ENCODE measurements at regions of chr2 and their contacts with region 1.

Region 1: DNA sequence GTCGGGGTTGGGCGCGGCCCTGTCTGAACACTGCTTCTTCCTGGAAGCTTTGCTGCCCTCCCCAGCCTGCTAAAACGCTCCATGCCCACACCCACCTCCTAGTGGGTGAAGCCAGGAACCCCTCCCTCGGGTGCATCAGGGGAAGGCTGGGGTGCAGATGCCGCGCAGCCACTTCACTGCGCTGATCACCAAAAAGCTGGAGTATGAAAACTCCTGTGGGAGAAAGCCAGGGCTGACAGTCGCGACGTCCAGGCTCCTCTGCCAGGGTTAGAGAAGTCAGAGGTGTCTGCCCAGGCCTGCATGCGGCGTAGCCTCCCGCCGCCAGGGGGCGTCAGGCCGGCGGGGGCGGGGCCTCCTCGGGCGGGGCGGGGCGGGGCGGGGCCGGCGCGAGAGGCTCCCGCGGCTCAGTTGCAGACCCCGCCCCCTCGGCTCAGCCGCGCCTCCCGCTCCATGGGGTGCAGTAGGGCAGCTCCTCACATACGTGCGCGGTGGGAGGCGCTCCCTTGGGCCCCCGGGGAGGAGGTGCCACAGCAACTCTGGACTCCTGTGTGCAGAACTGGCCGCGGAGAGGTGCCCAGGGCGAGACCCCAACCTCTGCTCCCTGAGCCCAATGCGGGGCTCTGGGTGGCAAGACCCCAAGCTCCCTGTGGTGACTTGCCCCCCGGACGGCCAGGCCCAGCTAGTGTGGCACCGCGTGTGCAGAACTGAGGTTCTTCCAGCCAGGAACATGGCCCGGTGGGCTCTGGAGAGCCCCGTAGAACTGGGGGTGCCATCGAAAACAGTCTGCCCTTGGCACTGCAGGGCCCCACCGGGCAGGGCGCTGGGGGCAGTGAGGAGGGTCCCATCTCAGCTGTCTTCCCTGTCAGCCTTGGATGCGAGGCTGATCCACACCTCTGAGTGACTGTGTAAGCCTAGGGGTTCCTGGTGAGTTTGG is 1.8 kb upstream of the RNPEPL1 start:
- DNase-seq: peak; percentile 81
- ATAC-seq: peak; percentile 71
- H3K4me3 ChIP-seq: peak overlapping the region; percentile 64 to 85
- H3K27ac ChIP-seq: peak overlapping the region; percentile 100
- H3K4me1 ChIP-seq: peaks cover 51 to 73% of the 10 kb centered on the region in 2 experiments
- H3K27me3 ChIP-seq: no peaks in the 10 kb centered on the region
- CTCF ChIP-seq: peak in 2 of 3 experiments; percentile 68 to 78; a peak in 4 of 6 replicates
- POLR2A ChIP-seq: no peak
- RAD21 ChIP-seq: no peak

Region 2: GRCh38 chr2:239991689-239992314 is 574.7 kb before region 1 on chr2:
- CTCF ChIA-PET with region 1: no interaction called
- POLR2A ChIA-PET with region 1: no interaction called
- RAD21 ChIA-PET with region 1: no interaction called
- intact Hi-C with region 1: no loop called
- DNase-seq: peak; percentile 27
- ATAC-seq: peak; percentile 70
- H3K4me3 ChIP-seq: no peak overlapping the region
- H3K27ac ChIP-seq: no peak overlapping the region
- H3K4me1 ChIP-seq: no peaks in the 10 kb centered on the region
- H3K27me3 ChIP-seq: no peaks in the 10 kb centered on the region
- CTCF ChIP-seq: peak; percentile 62 to 89 (median 72); a peak in 5 of 6 replicates
- POLR2A ChIP-seq: no peak
- RAD21 ChIP-seq: peak; percentile 76

Region 3: GRCh38 chr2:240170356-240171282 is 395.9 kb before region 1 on chr2:
- CTCF ChIA-PET with region 1: no interaction called
- POLR2A ChIA-PET with region 1: no interaction called
- RAD21 ChIA-PET with region 1: no interaction called
- intact Hi-C with region 1: no loop called
- DNase-seq: no peak
- ATAC-seq: peak; percentile 54; the same call in 1 of the 2 replicates
- H3K4me3 ChIP-seq: no peak overlapping the region
- H3K27ac ChIP-seq: no peak overlapping the region
- H3K4me1 ChIP-seq: no peaks in the 10 kb centered on the region
- H3K27me3 ChIP-seq: no peaks in the 10 kb centered on the region
- CTCF ChIP-seq: no peak
- POLR2A ChIP-seq: no peak
- RAD21 ChIP-seq: no peak

Region 4: GRCh38 chr2:240513549-240514287 is 52.8 kb before region 1 on chr2:
- CTCF ChIA-PET with region 1: interaction called, 9 read pairs
- POLR2A ChIA-PET with region 1: interaction called, 4 read pairs
- RAD21 ChIA-PET with region 1: interaction called in 1 of 2 experiments, 3 read pairs
- intact Hi-C with region 1: loop called (anchors 5 kb)
- DNase-seq: peak; percentile 29
- ATAC-seq: peak; percentile 99
- H3K4me3 ChIP-seq: no peak overlapping the region
- H3K27ac ChIP-seq: no peak overlapping the region
- H3K4me1 ChIP-seq: peaks cover 0 to 6% of the 10 kb centered on the region in 2 experiments; a peak in 2 of 4 replicates
- H3K27me3 ChIP-seq: no peaks in the 10 kb centered on the region
- CTCF ChIP-seq: peak; percentile 71 to 97 (median 96); a peak in 5 of 6 replicates
- POLR2A ChIP-seq: no peak
- RAD21 ChIP-seq: peak; percentile 92

Region 5: GRCh38 chr2:240579771-240580614 is 13.5 kb after region 1 on chr2:
- CTCF ChIA-PET with region 1: interaction called, 48 read pairs
- POLR2A ChIA-PET with region 1: interaction called, 23 read pairs
- RAD21 ChIA-PET with region 1: interaction called, 5 read pairs
- intact Hi-C with region 1: loop called (anchors 1 kb)
- DNase-seq: peak; percentile 77
- ATAC-seq: peak; percentile 82
- H3K4me3 ChIP-seq: peak overlapping the region; percentile 1 to 40; a peak in 3 of 4 replicates
- H3K27ac ChIP-seq: peak overlapping the region; percentile 77
- H3K4me1 ChIP-seq: peaks cover 42 to 55% of the 10 kb centered on the region in 2 experiments
- H3K27me3 ChIP-seq: no peaks in the 10 kb centered on the region
- CTCF ChIP-seq: peak in 2 of 3 experiments; percentile 62 to 75; a peak in 4 of 6 replicates
- POLR2A ChIP-seq: no peak
- RAD21 ChIP-seq: no peak

Region 6: DNA sequence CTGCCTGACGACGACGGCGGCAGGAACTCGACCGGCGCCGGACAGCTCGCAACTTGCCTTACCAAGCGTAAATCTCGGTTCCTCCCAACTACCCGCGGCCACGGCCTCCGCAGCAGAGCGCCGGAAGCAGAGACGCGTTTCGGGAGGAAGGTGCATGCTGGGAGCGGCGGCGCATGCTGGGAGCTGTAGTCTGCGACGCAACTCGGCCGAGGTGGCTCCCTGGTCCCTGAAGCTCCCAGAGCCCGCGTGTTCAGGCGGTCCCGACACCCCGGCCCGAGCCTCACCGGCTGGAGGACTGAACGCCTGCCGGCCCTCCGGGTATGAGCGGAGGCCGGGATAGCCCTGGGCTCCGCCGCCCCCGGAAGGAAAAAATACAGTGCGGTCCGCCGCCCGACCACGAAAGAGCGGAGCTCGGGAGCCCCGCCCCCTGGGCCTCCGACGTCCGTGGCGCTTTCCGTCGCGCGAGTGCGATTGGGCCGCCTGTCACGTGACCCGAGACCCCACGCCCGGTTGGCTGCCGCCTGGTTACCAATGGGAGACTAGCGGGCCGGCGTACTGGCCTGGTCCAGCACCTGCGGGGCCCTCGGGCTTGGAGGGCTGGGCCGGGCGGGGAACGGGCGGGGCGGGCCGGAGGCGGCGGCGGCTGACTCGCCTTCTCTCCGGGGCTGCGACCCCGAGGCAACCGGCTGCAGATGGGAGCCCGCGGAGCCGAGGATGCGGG is 19.9 kb after region 1 on chr2 and contains the start of gene CAPN10:
- CTCF ChIA-PET with region 1: interaction called, 48 read pairs
- POLR2A ChIA-PET with region 1: interaction called, 23 read pairs
- RAD21 ChIA-PET with region 1: interaction called, 4 to 6 read pairs
- intact Hi-C with region 1: loop called (anchors 2 kb)
- DNase-seq: peak; percentile 86
- ATAC-seq: peak; percentile 88
- H3K4me3 ChIP-seq: peak within 1 kb of the TSS; percentile 98 to 99
- H3K27ac ChIP-seq: peak within 1 kb of the TSS; percentile 85
- H3K4me1 ChIP-seq: peaks cover 28 to 47% of the 10 kb centered on the region in 2 experiments
- H3K27me3 ChIP-seq: no peaks in the 10 kb centered on the region
- CTCF ChIP-seq: no peak
- POLR2A ChIP-seq: no peak
- RAD21 ChIP-seq: no peak
- total RNA-seq, gene CAPN10: 40.7 TPM

Region 7: GRCh38 chr2:240596491-240596931 is 30.0 kb after region 1 on chr2:
- CTCF ChIA-PET with region 1: no interaction called
- POLR2A ChIA-PET with region 1: no interaction called
- RAD21 ChIA-PET with region 1: no interaction called
- intact Hi-C with region 1: no loop called
- DNase-seq: no peak
- ATAC-seq: no peak
- H3K4me3 ChIP-seq: no peak overlapping the region
- H3K27ac ChIP-seq: no peak overlapping the region
- H3K4me1 ChIP-seq: no peaks in the 10 kb centered on the region
- H3K27me3 ChIP-seq: no peaks in the 10 kb centered on the region
- CTCF ChIP-seq: no peak
- POLR2A ChIP-seq: no peak
- RAD21 ChIP-seq: no peak